Activated naive CD4-positive, alpha-beta T cell treated with anti-CD3 and anti-CD28 coated beads, Interleukin-2, amount 10 ng/mL, durations not matched to agents 7 days and 5 days (primary cell): ENCODE measurements at regions of chr11 and their contacts with region 1.

Region 1: DNA sequence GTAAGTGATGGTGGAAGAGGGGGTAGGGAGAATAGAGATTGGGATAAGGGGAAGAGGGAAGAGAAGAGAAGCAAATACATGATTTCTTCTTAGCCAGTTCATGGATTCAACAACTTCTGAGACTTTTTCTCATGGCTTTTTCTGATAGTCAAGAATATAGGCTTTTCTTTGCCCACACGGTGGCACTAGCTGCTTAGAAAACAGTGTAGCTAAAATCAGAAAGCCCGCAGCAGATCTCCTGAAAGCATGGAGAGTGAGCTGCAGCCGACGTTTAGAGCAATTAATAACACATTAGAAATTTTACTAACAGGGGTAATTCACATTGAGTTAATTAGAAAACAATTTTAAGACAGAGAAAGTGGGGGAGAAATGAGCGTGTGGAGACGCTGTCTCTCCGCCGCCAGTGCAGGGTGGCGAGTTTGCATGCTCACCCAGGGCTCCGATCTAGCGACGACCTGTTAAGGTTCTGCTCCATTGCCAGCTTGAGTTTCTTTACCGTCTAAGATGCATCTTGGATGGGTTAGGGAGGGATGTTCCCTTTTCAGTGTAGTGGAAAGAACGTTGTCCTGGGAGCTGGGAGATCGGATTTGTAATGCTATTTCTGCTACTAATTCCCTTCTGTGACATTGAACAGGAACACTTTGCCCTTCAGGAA is 3.3 kb upstream of the RAG1 start:
- DNase-seq: peak; percentile 74
- H3K4me3 Mint-ChIP-seq: peak overlapping the region; percentile 29
- H3K27ac Mint-ChIP-seq: no peak overlapping the region
- H3K4me1 Mint-ChIP-seq: peaks cover 12% of the 10 kb centered on the region
- H3K27me3 Mint-ChIP-seq: peaks cover 53% of the 10 kb centered on the region

Region 2: DNA sequence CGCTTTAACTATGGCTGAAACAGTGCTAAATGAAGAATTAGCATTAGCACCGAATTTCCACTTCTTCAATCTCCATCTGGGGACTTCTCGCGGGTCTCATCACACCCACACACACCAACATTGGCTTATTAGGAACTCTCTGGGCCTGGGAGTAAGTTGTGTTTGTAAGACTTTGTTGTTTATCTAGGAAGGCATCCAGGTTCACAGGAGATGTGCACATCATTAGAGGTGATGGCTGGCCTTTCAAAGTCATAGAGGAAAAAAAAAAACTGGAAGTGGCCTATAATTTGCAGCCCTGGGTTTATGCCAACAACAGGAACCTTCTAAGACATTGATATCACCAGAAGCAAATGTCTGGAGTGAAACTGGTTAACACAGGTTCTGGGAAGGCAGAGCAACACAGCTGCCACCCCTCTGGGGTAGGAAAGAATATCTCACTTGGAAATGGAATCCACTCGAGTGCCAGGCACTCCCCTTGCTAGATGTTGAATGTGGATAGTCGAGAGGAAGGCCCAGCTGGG is 138.9 kb before region 1 on chr11:
- CTCF ChIA-PET with region 1: no interaction called
- DNase-seq: no peak
- H3K4me3 Mint-ChIP-seq: no peak overlapping the region
- H3K27ac Mint-ChIP-seq: no peak overlapping the region
- H3K4me1 Mint-ChIP-seq: peaks cover 14% of the 10 kb centered on the region
- H3K27me3 Mint-ChIP-seq: peaks cover 13% of the 10 kb centered on the region

Region 3: GRCh38 chr11:36672813-36673450 is 108.4 kb after region 1 on chr11:
- CTCF ChIA-PET with region 1: interaction called, 45 read pairs
- DNase-seq: no peak
- H3K4me3 Mint-ChIP-seq: no peak overlapping the region
- H3K27ac Mint-ChIP-seq: no peak overlapping the region
- H3K4me1 Mint-ChIP-seq: no peaks in the 10 kb centered on the region
- H3K27me3 Mint-ChIP-seq: no peaks in the 10 kb centered on the region

Region 4: DNA sequence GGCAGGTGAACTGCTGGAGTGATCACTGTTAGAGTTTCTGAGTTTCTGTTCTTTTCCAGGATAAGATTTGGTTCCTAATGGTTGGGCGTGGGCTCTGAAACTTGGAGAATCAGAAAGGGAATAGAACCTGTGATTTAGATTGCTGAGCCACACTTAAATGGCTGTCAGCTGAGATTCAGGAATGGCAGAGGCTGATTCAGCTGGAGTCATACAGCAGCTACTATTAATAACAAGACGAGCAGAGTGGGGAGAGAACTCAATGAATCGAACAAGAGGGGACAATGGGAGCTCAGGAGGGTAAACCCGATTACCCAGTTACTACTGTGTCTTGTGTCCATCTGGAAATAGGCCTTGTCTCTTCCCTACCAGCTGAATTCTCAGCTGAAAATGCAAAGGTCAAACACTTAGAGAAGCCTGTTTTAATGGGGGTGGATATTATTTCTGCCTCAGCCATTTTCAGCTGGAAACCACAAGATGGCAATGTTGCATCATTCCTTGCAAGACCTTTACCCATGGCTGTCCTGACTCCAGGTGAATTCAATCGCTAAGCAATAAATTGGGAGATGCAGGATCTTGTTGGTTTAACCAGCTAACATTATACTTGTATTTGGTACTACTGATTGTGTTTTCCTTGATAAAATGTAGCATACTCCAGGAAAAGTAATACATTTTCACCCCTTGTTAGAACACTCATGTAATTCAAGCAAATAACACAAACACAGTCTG is 138.0 kb after region 1 on chr11:
- CTCF ChIA-PET with region 1: interaction called, 14 read pairs
- DNase-seq: no peak
- H3K4me3 Mint-ChIP-seq: no peak overlapping the region
- H3K27ac Mint-ChIP-seq: no peak overlapping the region
- H3K4me1 Mint-ChIP-seq: no peaks in the 10 kb centered on the region
- H3K27me3 Mint-ChIP-seq: no peaks in the 10 kb centered on the region